Colonic mucosa (tissue), 4 donors: ENCODE measurements at regions of chr1 and their contacts with region 1.

Region 1: GRCh38 chr1:246506674-246507481 is at the start of gene SMYD3:
- DNase-seq: peak; percentile 74
- H3K4me3 ChIP-seq: peak within 1 kb of the TSS; percentile 87
- H3K27ac ChIP-seq: peak within 1 kb of the TSS; percentile 38
- H3K4me1 ChIP-seq: peaks cover 8% of the 10 kb centered on the region
- H3K27me3 ChIP-seq: no peaks in the 10 kb centered on the region
- CTCF ChIP-seq: no peak
- total RNA-seq, gene SMYD3: 16.2 to 16.4 TPM

Region 2: DNA sequence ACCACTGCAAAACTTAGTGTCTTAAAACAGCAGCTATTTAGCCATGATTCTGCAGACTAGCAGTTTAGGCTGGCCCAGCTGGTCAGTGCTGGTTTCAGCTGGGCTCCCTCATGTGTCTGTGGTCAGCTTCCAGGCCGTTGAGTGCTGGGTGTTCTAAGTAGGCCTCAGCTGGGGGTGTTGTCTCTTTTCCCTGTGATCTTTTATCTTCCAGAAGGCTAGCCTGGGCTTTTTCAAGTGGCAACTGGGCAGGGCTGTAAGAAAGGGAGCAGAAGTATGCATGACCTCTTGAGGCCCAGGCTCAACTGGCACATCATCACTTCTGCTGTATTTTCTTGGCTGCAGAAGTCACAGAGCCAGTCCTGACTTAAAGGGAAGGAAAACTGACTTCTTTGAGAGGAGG is 1216.0 kb before region 1 on chr1:
- intact Hi-C with region 1: no loop called
- DNase-seq: no peak
- H3K4me3 ChIP-seq: no peak overlapping the region
- H3K27ac ChIP-seq: no peak overlapping the region
- H3K4me1 ChIP-seq: no peaks in the 10 kb centered on the region
- H3K27me3 ChIP-seq: no peaks in the 10 kb centered on the region
- CTCF ChIP-seq: no peak

Region 3: GRCh38 chr1:246544001-246544400 is 37.1 kb after region 1 on chr1:
- intact Hi-C with region 1: no loop called
- DNase-seq: no peak
- H3K4me3 ChIP-seq: no peak overlapping the region
- H3K27ac ChIP-seq: no peak overlapping the region
- H3K4me1 ChIP-seq: no peaks in the 10 kb centered on the region
- H3K27me3 ChIP-seq: no peaks in the 10 kb centered on the region
- CTCF ChIP-seq: no peak

Region 4: GRCh38 chr1:246566128-246566812 is 59.4 kb after region 1 on chr1 and contains the starts of genes CNST and TFB2M:
- intact Hi-C with region 1: loop called (anchors 10 kb)
- DNase-seq: peak; percentile 98
- H3K4me3 ChIP-seq: peak within 1 kb of the TSS; percentile 93
- H3K27ac ChIP-seq: peak within 1 kb of the TSS; percentile 98
- H3K4me1 ChIP-seq: peaks cover 8% of the 10 kb centered on the region
- H3K27me3 ChIP-seq: no peaks in the 10 kb centered on the region
- CTCF ChIP-seq: no peak
- total RNA-seq, gene CNST: 20.9 to 43.1 TPM
- total RNA-seq, gene TFB2M: 11.3 to 14.0 TPM

Region 5: GRCh38 chr1:246609632-246610031 is 102.8 kb after region 1 on chr1:
- intact Hi-C with region 1: loop called (anchors 10 kb)
- DNase-seq: no peak
- H3K4me3 ChIP-seq: no peak overlapping the region
- H3K27ac ChIP-seq: peak overlapping the region; percentile 1
- H3K4me1 ChIP-seq: no peaks in the 10 kb centered on the region
- H3K27me3 ChIP-seq: no peaks in the 10 kb centered on the region
- CTCF ChIP-seq: no peak